ENCODE measurements at regions of chr21 and their contacts with region 1.

Region 1: DNA sequence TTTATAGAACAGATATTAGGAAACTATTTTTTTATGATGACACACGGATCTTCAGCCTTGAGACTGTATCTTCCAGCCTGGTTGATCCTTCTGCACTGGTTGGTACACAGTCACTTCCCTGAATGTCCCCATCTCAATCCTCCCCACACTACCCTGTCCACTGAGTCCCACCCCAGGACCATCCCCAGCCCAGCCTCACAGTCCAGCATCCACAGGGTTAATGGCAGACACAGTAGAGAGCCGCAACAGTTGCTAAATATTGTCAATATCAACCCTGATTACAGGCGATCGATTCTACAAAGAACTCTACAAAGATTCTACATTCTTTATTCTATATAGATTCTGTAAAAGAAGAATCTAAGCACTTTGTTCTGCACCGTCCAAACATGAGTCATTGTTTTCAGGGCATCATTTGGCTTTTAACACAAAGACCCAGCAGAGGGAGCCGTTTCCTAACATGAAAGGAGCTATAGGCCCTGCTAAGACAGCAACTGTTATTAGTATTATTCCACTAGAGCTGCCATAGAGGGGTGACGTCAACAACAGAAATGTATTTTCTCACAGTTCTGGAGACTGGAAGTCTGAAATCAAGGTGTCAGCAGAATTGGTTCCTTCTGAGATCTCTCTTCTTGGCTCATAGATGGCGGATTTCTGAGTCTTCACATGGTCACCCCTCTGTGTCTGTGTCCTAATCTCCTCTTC is 30.1 kb upstream of the IFNAR2 start:
- DNase-seq: peak; percentile 93
- H3K4me3 Mint-ChIP-seq: no peak overlapping the region
- H3K27ac Mint-ChIP-seq: peak overlapping the region; percentile 43
- H3K4me1 Mint-ChIP-seq: peaks cover 31% of the 10 kb centered on the region
- H3K27me3 Mint-ChIP-seq: no peaks in the 10 kb centered on the region

Region 2: DNA sequence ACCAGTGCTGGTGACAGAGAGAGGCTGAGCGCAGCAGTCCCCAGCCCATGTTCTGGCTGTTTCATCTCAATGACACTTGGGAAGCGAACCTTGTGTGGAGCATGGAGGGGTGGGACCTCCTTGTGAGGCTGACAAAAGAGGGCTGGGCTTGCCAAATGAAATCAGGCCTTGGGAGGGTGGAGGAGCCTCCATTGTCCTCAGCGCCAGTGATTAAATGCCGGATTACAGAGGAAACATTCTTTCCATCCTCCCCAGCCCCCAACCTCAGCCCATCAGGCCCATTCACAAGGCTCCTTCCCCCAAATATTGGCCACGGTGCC is 364.8 kb before region 1 on chr21:
- CTCF ChIA-PET with region 1: interaction called, 23 read pairs
- intact Hi-C with region 1: loop called (anchors 2 kb)
- DNase-seq: no peak
- H3K4me3 Mint-ChIP-seq: no peak overlapping the region
- H3K27ac Mint-ChIP-seq: no peak overlapping the region
- H3K4me1 Mint-ChIP-seq: no peaks in the 10 kb centered on the region
- H3K27me3 Mint-ChIP-seq: no peaks in the 10 kb centered on the region

Region 3: GRCh38 chr21:33019885-33020557 is 179.6 kb before region 1 on chr21:
- CTCF ChIA-PET with region 1: interaction called, 6 read pairs
- intact Hi-C with region 1: loop called (anchors 5 kb)
- DNase-seq: peak; percentile 31
- H3K4me3 Mint-ChIP-seq: peak overlapping the region; percentile 36
- H3K27ac Mint-ChIP-seq: no peak overlapping the region
- H3K4me1 Mint-ChIP-seq: peaks cover 34% of the 10 kb centered on the region
- H3K27me3 Mint-ChIP-seq: peaks cover 71% of the 10 kb centered on the region

Region 4: GRCh38 chr21:33133892-33134291 is 65.8 kb before region 1 on chr21:
- CTCF ChIA-PET with region 1: interaction called, 11 read pairs
- intact Hi-C with region 1: loop called (anchors 1 kb)
- DNase-seq: no peak
- H3K4me3 Mint-ChIP-seq: no peak overlapping the region
- H3K27ac Mint-ChIP-seq: no peak overlapping the region
- H3K4me1 Mint-ChIP-seq: no peaks in the 10 kb centered on the region
- H3K27me3 Mint-ChIP-seq: no peaks in the 10 kb centered on the region

Region 5: GRCh38 chr21:33229784-33230544 is 30.3 kb after region 1 on chr21 and contains the start of gene IFNAR2:
- CTCF ChIA-PET with region 1: no interaction called
- intact Hi-C with region 1: loop called (anchors 1 kb)
- DNase-seq: peak; percentile 73
- H3K4me3 Mint-ChIP-seq: peak within 1 kb of the TSS; percentile 89
- H3K27ac Mint-ChIP-seq: peak within 1 kb of the TSS; percentile 92
- H3K4me1 Mint-ChIP-seq: peaks cover 52% of the 10 kb centered on the region
- H3K27me3 Mint-ChIP-seq: no peaks in the 10 kb centered on the region
- total RNA-seq, gene IFNAR2: 16.6 to 19.4 TPM

Region 6: DNA sequence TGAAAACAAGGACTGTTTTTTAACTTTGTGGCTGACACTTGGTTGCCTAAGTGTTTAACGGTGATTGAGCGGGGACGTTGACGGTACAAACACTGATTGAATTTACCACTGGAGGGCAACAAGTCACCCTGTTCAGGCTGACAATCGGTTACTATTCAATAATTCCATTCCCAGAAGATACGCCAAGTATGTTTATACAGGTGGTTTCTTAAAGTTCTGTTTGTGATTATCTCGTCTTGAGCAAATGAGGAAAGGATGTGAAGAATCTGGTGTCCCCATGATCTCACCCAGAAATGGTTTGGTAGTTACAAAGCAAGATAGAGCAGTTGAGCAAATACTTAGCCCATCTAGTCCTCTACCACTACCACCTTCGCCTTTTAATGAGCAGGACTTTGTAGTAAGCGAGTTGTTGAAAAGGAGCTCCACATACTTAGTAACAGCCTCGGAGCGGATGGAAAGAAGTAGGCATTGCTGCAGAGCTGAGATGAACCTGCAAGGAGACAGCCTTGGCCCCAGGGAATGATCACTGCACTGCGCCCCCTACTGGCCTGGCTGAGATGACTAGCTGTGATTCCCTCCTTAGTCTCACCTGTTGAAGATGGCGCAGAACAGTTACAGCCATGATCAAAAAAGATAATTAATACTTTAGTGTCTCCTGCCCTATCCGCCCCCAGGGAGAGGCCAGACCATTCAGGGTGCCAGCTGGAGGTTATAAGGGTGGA is 161.4 kb after region 1 on chr21:
- CTCF ChIA-PET with region 1: interaction called, 39 read pairs
- intact Hi-C with region 1: loop called (anchors 1 kb)
- DNase-seq: peak; percentile 97
- H3K4me3 Mint-ChIP-seq: peak overlapping the region; percentile 86
- H3K27ac Mint-ChIP-seq: peak overlapping the region; percentile 95
- H3K4me1 Mint-ChIP-seq: peaks cover 17% of the 10 kb centered on the region
- H3K27me3 Mint-ChIP-seq: no peaks in the 10 kb centered on the region

Region 7: GRCh38 chr21:33588485-33589335 is 389.0 kb after region 1 on chr21 and contains the start of gene DONSON:
- CTCF ChIA-PET with region 1: no interaction called
- intact Hi-C with region 1: loop called (anchors 5 kb)
- DNase-seq: peak; percentile 82
- H3K4me3 Mint-ChIP-seq: peak within 1 kb of the TSS; percentile 91
- H3K27ac Mint-ChIP-seq: peak within 1 kb of the TSS; percentile 77
- H3K4me1 Mint-ChIP-seq: peaks cover 15% of the 10 kb centered on the region
- H3K27me3 Mint-ChIP-seq: no peaks in the 10 kb centered on the region
- total RNA-seq, gene DONSON: 35.6 to 42.4 TPM

Region 8: DNA sequence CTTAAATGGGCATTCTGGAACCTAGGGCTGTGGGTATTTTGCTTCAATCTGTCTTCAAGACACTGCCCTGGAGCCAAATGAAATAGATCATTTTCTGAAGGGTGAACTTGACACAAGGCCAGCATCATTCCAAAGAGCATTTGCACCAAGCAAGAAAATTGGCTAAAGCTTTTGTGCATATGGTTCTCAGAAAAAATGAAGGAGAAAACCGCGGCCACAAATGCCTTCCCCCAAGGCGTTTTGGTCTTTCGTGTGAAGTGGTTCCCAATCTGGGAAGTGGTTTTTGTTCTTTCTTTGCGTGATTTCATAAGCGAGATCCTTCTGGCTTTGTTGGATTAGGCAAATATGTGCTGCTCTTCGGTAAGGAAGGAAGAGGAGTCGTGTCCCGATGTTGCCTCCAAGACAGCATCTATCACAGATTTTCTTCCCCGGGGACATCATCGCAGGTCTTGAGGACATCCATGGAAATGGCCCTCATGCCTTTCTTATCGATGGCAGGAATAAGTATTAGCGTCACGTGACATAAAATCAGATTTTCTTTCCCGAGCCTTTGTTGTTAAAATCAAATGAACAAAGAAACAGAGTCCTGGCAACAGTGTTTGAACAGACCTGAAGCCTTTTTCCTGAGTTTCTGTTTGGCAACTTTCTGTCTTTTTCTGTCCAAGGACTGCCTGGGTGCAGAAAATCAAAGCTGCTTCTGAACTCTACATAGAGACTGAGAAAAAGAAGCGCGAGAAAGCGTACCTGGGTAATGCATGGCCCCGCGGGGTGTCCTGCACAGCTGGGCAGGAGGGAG is 684.9 kb after region 1 on chr21:
- CTCF ChIA-PET with region 1: no interaction called
- intact Hi-C with region 1: no loop called
- DNase-seq: no peak
- H3K4me3 Mint-ChIP-seq: no peak overlapping the region
- H3K27ac Mint-ChIP-seq: no peak overlapping the region
- H3K4me1 Mint-ChIP-seq: no peaks in the 10 kb centered on the region
- H3K27me3 Mint-ChIP-seq: no peaks in the 10 kb centered on the region